ENCODE measurements at regions of chr3 and their contacts with region 1.

Region 1: DNA sequence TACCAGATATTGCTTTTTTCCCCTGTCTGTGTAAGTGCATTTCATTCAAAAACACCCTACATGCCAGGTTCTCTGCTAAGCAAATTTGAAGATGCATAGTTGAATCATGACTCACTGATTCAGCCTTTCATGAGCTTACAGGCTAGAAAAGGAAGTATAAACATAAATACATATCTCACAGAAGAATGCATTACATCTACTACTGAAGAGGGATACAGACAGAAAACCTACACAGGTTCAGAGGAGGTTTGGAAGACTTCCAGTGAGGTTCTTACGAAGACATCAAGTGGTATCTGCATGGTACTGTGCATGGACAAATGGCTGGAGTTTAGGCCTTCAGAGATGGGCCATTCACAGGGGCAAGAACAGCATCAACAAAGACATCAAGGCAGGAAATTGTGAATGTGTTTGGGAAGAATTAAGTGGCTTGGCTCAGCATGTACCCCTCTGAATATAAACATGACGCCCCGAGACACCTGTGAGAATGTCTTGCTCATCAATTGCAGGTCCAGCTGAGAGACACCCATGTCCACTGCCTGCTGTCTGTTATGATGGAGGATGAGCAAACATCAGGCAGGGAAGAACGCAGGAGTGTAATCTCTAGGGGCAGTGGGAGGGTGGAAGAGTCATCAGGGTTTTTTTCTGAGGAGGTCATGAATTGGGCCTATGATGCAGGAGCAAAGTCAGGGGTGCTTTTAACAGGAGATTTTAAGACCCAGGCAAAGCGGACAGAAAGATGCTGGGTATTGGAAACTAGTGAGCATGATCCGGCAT is 105.1 kb upstream of the GALNT15 start:
- DNase-seq: peak; percentile 14 to 95
- H3K4me3 ChIP-seq: no peak overlapping the region
- H3K27ac ChIP-seq: peak overlapping the region; percentile 70
- H3K4me1 ChIP-seq: peaks cover 44% of the 10 kb centered on the region
- H3K27me3 ChIP-seq: no peaks in the 10 kb centered on the region
- CTCF ChIP-seq: no peak

Region 2: DNA sequence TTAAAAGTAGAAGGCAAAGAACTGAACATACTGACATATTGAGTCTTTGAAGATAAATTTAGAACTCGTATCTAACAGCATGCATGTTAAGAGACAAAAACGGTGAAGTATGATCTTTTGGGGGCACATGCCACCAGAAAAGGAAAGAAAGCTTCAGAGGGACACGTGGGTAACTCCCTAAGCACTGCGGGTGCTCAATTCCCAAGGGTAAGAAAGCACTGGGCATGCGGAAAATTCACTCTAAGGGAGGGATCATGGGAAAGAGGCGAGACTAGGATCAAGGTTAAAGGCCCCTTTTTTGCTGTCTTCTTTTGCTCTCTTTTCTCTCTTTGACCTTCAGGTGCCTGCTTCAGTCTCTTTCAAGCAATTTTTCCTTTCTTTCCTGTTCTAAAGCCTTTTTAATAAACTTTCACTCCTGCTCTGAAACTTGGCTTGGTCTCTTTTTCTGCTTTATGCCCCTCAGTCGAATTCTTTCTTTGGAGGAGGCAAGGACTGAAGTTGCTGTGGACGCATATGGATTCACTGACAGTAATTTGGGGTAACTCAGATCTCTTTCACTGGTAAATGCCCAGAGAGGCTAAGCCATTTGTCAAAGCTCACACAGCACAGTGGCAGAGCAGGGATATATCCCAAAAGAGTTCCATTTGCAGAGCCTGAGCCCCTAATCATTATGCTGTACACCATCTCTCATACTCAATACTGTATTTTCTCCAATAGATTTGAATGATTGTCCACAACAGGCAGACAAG is 32.7 kb after region 1 on chr3:
- CTCF ChIA-PET with region 1: no interaction called
- POLR2A ChIA-PET with region 1: no interaction called
- intact Hi-C with region 1: loop called (anchors 1 kb)
- DNase-seq: no peak
- H3K4me3 ChIP-seq: peak overlapping the region; percentile 20; the same call in 1 of the 2 replicates
- H3K27ac ChIP-seq: peak overlapping the region; percentile 94
- H3K4me1 ChIP-seq: peaks cover 11% of the 10 kb centered on the region
- H3K27me3 ChIP-seq: no peaks in the 10 kb centered on the region
- CTCF ChIP-seq: no peak